Ascending aorta (tissue), 2 donors: ENCODE measurements at regions of chr10 and their contacts with region 1.

Region 1: DNA sequence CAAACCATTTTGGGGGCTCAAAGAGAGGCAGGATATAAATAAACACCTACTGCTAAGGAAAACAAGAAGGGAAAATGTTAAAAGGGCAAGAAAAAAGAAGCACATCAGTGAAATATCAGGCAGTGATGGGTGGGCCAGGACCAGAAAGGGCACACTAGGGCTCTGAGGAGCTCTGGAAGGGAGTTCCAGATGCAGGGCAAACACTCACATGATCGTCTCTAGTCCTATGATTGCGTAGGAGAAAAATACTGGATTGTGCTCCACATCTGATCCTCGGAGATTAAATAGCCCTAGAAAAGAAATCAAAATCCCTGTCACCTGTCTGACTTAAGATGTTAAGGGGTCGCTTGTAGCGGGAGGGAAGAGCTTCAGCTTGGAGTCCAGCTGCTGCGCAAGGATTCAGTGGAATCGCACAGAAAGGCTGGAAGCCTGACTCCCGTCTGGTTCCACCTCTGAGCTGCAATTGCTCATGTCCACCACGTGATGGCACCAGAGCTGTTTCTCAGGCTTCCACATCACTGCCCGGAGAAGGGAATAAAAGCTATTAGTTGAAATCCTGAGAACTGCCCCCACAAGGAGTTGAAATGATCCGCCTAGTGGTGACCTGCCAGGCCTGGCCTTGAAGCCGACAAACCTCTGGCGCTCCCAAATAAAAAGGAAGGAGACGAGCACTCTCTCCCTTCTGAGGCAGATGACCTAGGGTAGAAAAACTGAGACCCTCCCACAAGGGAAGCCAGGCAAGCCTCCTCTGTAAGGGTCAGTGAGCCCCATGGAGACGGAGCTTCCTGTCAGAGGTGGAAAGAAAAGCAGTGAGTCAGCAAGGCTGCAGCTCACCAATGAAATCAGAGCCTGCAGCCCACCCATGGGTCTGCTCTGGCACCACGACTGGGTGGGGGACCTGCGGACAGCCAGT is 39.2 kb downstream of the XPNPEP1 start:
- DNase-seq: peak in 1 of 2 donors; percentile 84
- H3K4me3 ChIP-seq: peak overlapping the region in 1 of 2 donors; percentile 45
- H3K27ac ChIP-seq: peak overlapping the region; percentile 60 to 68
- H3K4me1 ChIP-seq: peaks cover 5 to 24% of the 10 kb centered on the region in 2 donors
- H3K27me3 ChIP-seq: no peaks in the 10 kb centered on the region
- CTCF ChIP-seq: peak; percentile 95 to 97 (median 95)

Region 2: GRCh38 chr10:110007701-110008517 is 123.8 kb after region 1 on chr10 and contains the start of gene ADD3:
- intact Hi-C with region 1: loop called (anchors 2 kb)
- DNase-seq: peak; percentile 77 to 97
- H3K4me3 ChIP-seq: peak within 1 kb of the TSS; percentile 68 to 100
- H3K27ac ChIP-seq: peak within 1 kb of the TSS; percentile 94 to 99
- H3K4me1 ChIP-seq: peaks cover 3 to 15% of the 10 kb centered on the region in 2 donors
- H3K27me3 ChIP-seq: no peaks in the 10 kb centered on the region
- CTCF ChIP-seq: no peak
- total RNA-seq, gene ADD3: 93.0 TPM

Region 3: GRCh38 chr10:110137142-110137545 is 253.0 kb after region 1 on chr10:
- intact Hi-C with region 1: loop called (anchors 2 kb)
- DNase-seq: no peak
- H3K4me3 ChIP-seq: no peak overlapping the region
- H3K27ac ChIP-seq: peak overlapping the region; percentile 38 to 53
- H3K4me1 ChIP-seq: peaks cover 0 to 15% of the 10 kb centered on the region in 2 donors
- H3K27me3 ChIP-seq: no peaks in the 10 kb centered on the region
- CTCF ChIP-seq: peak; percentile 72 to 86 (median 78)

Region 4: GRCh38 chr10:110304780-110305421 is 420.8 kb after region 1 on chr10 and contains the start of gene SMNDC1:
- intact Hi-C with region 1: loop called (anchors 10 kb)
- DNase-seq: peak; percentile 90 to 99
- H3K4me3 ChIP-seq: peak within 1 kb of the TSS; percentile 75 to 99
- H3K27ac ChIP-seq: peak within 1 kb of the TSS; percentile 95 to 96
- H3K4me1 ChIP-seq: peaks cover 5 to 36% of the 10 kb centered on the region in 2 donors
- H3K27me3 ChIP-seq: no peaks in the 10 kb centered on the region
- CTCF ChIP-seq: no peak
- total RNA-seq, gene SMNDC1: 6.9 TPM